ENCODE measurements at regions of chr11 and their contacts with region 1.

Region 1: GRCh38 chr11:13335319-13335718 is 57.7 kb downstream of the BMAL1 start:
- DNase-seq: peak; percentile 74
- H3K4me3 Mint-ChIP-seq: no peak overlapping the region
- H3K27ac Mint-ChIP-seq: no peak overlapping the region
- H3K4me1 Mint-ChIP-seq: peaks cover 68% of the 10 kb centered on the region
- H3K27me3 Mint-ChIP-seq: no peaks in the 10 kb centered on the region

Region 2: GRCh38 chr11:13210424-13210823 is 124.9 kb before region 1 on chr11:
- CTCF ChIA-PET with region 1: interaction called, 12 read pairs
- POLR2A ChIA-PET with region 1: interaction called, 9 read pairs
- DNase-seq: peak; percentile 39
- H3K4me3 Mint-ChIP-seq: no peak overlapping the region
- H3K27ac Mint-ChIP-seq: no peak overlapping the region
- H3K4me1 Mint-ChIP-seq: peaks cover 36% of the 10 kb centered on the region
- H3K27me3 Mint-ChIP-seq: peaks cover 3% of the 10 kb centered on the region

Region 3: DNA sequence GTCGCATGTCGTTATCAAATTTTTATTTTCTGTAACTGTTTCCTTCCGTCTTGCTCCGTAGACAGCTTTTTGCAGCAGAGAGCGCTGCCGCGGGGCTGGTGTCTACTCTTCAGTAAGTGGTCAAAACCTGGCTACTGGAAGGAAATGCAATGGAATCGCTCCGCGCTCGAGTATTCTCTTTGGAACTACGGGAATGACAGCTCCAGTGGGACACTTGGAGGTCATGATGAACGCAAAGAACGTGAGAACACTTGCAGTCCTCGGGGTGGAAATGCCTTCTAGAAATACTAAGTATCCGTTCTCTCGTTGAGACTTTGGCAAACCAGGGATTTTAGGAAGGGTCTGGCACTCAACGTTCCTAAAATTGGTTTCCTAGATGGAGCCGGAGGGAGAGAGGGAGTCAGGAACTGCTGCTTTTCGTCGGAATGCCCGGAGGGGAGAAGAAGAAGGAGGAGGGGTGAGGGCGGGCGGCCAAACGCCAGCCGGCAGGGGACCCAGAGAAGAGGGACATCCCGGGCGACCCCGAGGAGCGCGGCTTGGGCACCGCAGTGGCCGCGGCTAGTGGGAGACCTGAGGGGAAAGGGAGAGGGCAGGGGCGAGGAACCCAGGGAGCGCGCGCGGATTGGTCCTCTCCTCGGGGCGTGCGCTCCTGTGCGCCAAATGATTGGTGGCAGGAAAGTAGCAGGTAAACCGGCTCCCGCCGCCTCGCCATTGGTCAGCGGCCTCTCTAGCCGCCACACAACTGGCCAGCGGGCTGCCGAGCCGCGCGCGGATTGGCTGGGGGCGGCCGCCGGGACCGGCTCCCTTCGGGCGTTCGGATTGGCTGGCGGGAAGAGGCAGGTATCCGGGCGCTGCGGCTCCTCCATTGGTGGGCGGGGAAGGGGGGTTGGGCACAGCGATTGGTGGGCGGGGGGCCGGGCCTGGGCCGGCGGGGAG is 58.2 kb before region 1 on chr11:
- CTCF ChIA-PET with region 1: interaction called, 26 read pairs
- POLR2A ChIA-PET with region 1: interaction called, 29 read pairs
- DNase-seq: peak; percentile 98
- H3K4me3 Mint-ChIP-seq: peak overlapping the region; percentile 94
- H3K27ac Mint-ChIP-seq: peak overlapping the region; percentile 78
- H3K4me1 Mint-ChIP-seq: peaks cover 51% of the 10 kb centered on the region
- H3K27me3 Mint-ChIP-seq: peaks cover 36% of the 10 kb centered on the region

Region 4: DNA sequence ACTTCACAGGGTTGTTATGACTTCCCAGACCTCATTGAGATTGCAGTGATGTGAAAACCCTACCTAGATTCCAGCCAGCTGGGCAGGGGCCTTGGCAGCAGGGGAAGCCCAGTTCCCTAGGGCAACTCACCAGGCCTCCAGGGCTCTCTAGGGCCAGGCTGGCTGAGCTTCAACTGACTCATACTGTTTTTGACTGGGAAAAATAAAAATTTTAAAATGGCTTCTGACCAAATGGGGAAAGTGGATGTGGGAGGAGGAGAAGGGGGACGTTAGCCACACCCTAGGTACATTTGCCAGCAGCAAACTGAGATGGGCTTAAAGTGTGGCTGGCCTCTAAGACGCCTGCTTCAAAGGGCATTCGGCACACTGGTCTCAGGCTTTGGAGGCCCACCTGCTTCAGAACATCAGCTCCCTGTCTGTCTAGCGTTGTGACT is 18.8 kb before region 1 on chr11:
- CTCF ChIA-PET with region 1: interaction called, 35 read pairs
- POLR2A ChIA-PET with region 1: interaction called, 3 read pairs
- DNase-seq: no peak
- H3K4me3 Mint-ChIP-seq: no peak overlapping the region
- H3K27ac Mint-ChIP-seq: no peak overlapping the region
- H3K4me1 Mint-ChIP-seq: peaks cover 32% of the 10 kb centered on the region
- H3K27me3 Mint-ChIP-seq: no peaks in the 10 kb centered on the region